ENCODE measurements at regions of chr6 and their contacts with region 1.

Region 1: GRCh38 chr6:152948150-152948768 is 34.6 kb downstream of the FBXO5 start:
- ATAC-seq: peak; percentile 48 to 87 (median 68)
- H3K4me3 ChIP-seq: no peak overlapping the region
- H3K27ac ChIP-seq: no peak overlapping the region
- H3K4me1 ChIP-seq: no peaks in the 10 kb centered on the region

Region 2: DNA sequence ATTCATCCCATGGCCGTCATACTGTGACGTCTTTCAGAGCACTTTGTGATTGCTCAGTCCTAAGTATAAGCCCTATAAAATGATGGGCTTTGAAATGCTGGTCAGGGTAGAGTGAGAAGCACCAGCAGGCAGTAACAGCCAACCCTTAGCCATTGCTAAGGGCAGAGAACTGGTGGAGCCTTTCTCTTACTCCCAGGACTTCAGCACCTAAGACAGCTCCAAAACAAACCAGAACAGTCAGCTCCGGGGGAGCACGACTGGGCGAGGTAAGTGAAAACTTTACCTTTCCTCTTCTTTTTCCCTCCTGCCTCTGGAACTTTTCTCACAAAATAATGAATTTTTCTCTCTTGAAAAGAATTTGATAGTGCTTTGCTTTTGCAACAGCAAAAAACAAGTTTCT is 197.6 kb before region 1 on chr6 and contains the start of gene VIP:
- in situ Hi-C with region 1: loop called in 5 of 9 experiments (anchors 10 to 25 kb)
- ATAC-seq: peak in 5 of 8 experiments; percentile 57 to 83 (median 67)
- H3K4me3 ChIP-seq: no peak within 1 kb of the TSS
- H3K27ac ChIP-seq: no peak within 1 kb of the TSS
- H3K4me1 ChIP-seq: no peaks in the 10 kb centered on the region
- total RNA-seq, gene VIP: 0.29 TPM in 1 of 8 experiments, not detected in the others

Region 3: GRCh38 chr6:153210083-153210482 is 261.8 kb after region 1 on chr6:
- in situ Hi-C with region 1: no loop called
- ATAC-seq: no peak
- H3K4me3 ChIP-seq: no peak overlapping the region
- H3K27ac ChIP-seq: no peak overlapping the region
- H3K4me1 ChIP-seq: no peaks in the 10 kb centered on the region

Region 4: DNA sequence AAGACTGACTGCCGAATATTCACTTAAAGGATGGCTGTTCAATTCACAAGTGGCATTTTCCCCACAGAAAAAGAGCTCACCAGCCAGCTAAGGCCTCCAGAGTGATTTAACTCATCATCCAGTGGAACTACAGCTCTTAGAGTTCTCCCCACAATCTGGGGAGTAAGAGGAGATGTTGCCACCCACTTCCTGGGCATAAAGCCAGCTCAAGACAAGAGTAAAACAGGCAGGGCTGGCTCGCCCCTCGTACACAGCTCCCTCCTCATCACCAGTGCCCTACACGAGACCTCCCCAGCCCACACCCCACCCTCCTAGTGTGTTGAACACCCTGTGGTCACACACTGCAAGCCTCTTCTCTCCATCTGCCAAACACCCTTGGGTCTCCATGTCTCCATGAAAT is 1455.5 kb after region 1 on chr6:
- in situ Hi-C with region 1: no loop called
- ATAC-seq: peak in 5 of 8 experiments; percentile 24 to 66 (median 60)
- H3K4me3 ChIP-seq: no peak overlapping the region
- H3K27ac ChIP-seq: no peak overlapping the region
- H3K4me1 ChIP-seq: no peaks in the 10 kb centered on the region

Measured in motor neuron (in vitro differentiated cells).